ENCODE measurements at regions of chr12 and their contacts with region 1.

Region 1: GRCh38 chr12:53727310-53728041 is at the start of gene CALCOCO1:
- DNase-seq: peak; percentile 84 to 98 (median 95)
- ATAC-seq: peak; percentile 98
- H3K4me3 ChIP-seq: peak within 1 kb of the TSS; percentile 94
- H3K4me3 Mint-ChIP-seq: peak within 1 kb of the TSS; percentile 91 to 100 (median 94)
- H3K27ac ChIP-seq: peak within 1 kb of the TSS; percentile 73
- H3K27ac Mint-ChIP-seq: peak within 1 kb of the TSS; percentile 69 to 98 (median 91)
- H3K4me1 ChIP-seq: peaks cover 13 to 17% of the 10 kb centered on the region in 2 donors
- H3K4me1 Mint-ChIP-seq: peaks cover 10 to 41% (median 32%) of the 10 kb centered on the region in 7 donors
- H3K27me3 ChIP-seq: no peaks in the 10 kb centered on the region
- H3K27me3 Mint-ChIP-seq: peaks cover 0 to 13% (median 0%) of the 10 kb centered on the region in 5 donors
- total RNA-seq, gene CALCOCO1: 66.1 to 175 (median 137) TPM

Region 2: GRCh38 chr12:53500776-53501614 is 226.5 kb before region 1 on chr12 and contains the start of gene TARBP2:
- CTCF ChIA-PET with region 1: no interaction called
- POLR2A ChIA-PET with region 1: no interaction called
- intact Hi-C with region 1: loop called (anchors 1 to 2 kb)
- DNase-seq: peak; percentile 87 to 99 (median 98)
- ATAC-seq: peak; percentile 87
- H3K4me3 ChIP-seq: peak within 1 kb of the TSS; percentile 84
- H3K4me3 Mint-ChIP-seq: peak within 1 kb of the TSS; percentile 86 to 96 (median 92)
- H3K27ac ChIP-seq: peak within 1 kb of the TSS; percentile 98
- H3K27ac Mint-ChIP-seq: peak within 1 kb of the TSS; percentile 87 to 100 (median 97)
- H3K4me1 ChIP-seq: peaks cover 24 to 27% of the 10 kb centered on the region in 2 donors
- H3K4me1 Mint-ChIP-seq: peaks cover 15 to 56% (median 43%) of the 10 kb centered on the region in 7 donors
- H3K27me3 ChIP-seq: no peaks in the 10 kb centered on the region
- H3K27me3 Mint-ChIP-seq: no peaks in the 10 kb centered on the region
- total RNA-seq, gene TARBP2: 25.1 to 45.2 (median 40.7) TPM

Region 3: GRCh38 chr12:53675651-53676453 is 51.6 kb before region 1 on chr12 and contains the start of gene ATP5MC2:
- CTCF ChIA-PET with region 1: interaction called, 3 read pairs
- POLR2A ChIA-PET with region 1: interaction called, 5 read pairs
- intact Hi-C with region 1: loop called (anchors 1 kb)
- DNase-seq: peak; percentile 92 to 98 (median 97)
- ATAC-seq: peak; percentile 97
- H3K4me3 ChIP-seq: peak within 1 kb of the TSS; percentile 64
- H3K4me3 Mint-ChIP-seq: peak within 1 kb of the TSS; percentile 91 to 99 (median 94)
- H3K27ac ChIP-seq: peak within 1 kb of the TSS; percentile 76
- H3K27ac Mint-ChIP-seq: peak within 1 kb of the TSS; percentile 91 to 98 (median 95)
- H3K4me1 ChIP-seq: peaks cover 7 to 21% of the 10 kb centered on the region in 2 donors
- H3K4me1 Mint-ChIP-seq: peaks cover 21 to 38% (median 32%) of the 10 kb centered on the region in 7 donors
- H3K27me3 ChIP-seq: no peaks in the 10 kb centered on the region
- H3K27me3 Mint-ChIP-seq: peaks cover 16 to 35% (median 21%) of the 10 kb centered on the region in 5 donors
- total RNA-seq, gene ATP5MC2: 237 to 332 (median 275) TPM

Region 4: DNA sequence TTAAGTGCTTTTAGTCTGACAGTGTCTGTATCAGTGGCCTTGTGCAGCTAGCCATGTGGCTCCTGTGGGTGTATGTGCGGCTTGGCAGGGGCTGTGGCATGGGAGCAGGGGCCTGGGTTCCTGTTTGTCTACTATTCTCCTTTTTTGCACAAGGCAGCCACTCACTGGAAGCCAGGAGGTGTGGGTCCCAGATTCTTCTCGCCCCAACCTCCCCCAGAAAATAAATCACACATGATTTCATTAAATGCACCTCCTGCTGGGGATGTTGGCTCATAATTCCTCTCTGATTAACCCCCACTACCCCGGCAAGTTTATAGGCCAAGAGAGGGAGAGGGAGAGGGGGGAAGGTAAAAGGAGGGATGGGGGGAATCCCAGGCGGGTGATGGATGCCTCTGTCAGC is 17.8 kb before region 1 on chr12:
- CTCF ChIA-PET with region 1: no interaction called
- POLR2A ChIA-PET with region 1: interaction called, 4 read pairs
- intact Hi-C with region 1: loop called in 1 of 2 experiments (anchors 2 kb)
- DNase-seq: no peak
- ATAC-seq: no peak
- H3K4me3 ChIP-seq: no peak overlapping the region
- H3K4me3 Mint-ChIP-seq: no peak overlapping the region
- H3K27ac ChIP-seq: no peak overlapping the region
- H3K27ac Mint-ChIP-seq: no peak overlapping the region
- H3K4me1 ChIP-seq: no peaks in the 10 kb centered on the region
- H3K4me1 Mint-ChIP-seq: peaks cover 0 to 2% (median 0%) of the 10 kb centered on the region in 7 donors
- H3K27me3 ChIP-seq: peaks cover 0 to under 1% of the 10 kb centered on the region in 2 donors
- H3K27me3 Mint-ChIP-seq: peaks cover 8 to 36% (median 12%) of the 10 kb centered on the region in 5 donors

Region 5: DNA sequence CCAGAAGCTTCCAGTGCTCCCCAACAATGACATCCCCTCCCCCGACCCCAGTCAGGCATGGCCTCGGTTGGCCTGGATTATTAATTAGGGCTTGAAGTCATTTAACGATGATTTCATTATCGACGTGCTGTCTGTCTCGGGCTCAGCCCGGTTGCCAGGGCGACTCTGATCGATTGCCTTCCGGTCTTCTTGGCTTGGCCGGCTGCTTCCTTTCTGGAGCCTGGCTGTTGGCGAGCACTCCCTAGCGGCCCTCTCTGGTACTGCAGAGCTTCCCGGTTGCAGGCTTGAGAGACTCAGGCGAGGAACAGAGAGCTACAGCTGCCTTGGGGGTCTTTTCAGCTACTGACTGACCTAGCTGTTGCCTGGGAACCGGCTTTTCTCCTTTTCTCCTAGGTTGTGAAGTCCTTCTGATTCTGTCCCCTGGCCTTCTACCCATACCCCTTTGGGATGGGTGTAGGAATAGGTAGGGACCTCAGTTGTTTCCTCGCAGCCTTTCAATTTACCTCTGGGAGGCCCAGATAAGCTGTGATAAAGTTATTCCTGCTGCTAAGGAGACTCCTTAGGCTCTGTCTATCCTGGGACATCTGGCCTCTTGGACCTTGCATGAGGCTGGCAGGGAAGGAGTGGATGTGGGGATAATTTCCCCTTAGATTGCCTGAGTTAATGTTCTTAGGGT is 29.8 kb after region 1 on chr12:
- CTCF ChIA-PET with region 1: no interaction called
- POLR2A ChIA-PET with region 1: no interaction called
- intact Hi-C with region 1: no loop called
- DNase-seq: peak; percentile 49 to 81 (median 69)
- ATAC-seq: peak; percentile 91
- H3K4me3 ChIP-seq: peak overlapping the region; percentile 25
- H3K4me3 Mint-ChIP-seq: peak overlapping the region in 9 of 10 donors; percentile 39 to 64 (median 52)
- H3K27ac ChIP-seq: no peak overlapping the region
- H3K27ac Mint-ChIP-seq: peak overlapping the region in 1 of 9 donors; percentile 74
- H3K4me1 ChIP-seq: peaks cover 0 to 6% of the 10 kb centered on the region in 2 donors
- H3K4me1 Mint-ChIP-seq: peaks cover 0 to 35% (median 5%) of the 10 kb centered on the region in 7 donors
- H3K27me3 ChIP-seq: peaks cover 0 to 10% of the 10 kb centered on the region in 2 donors
- H3K27me3 Mint-ChIP-seq: peaks cover 37 to 51% (median 42%) of the 10 kb centered on the region in 5 donors

Region 6: DNA sequence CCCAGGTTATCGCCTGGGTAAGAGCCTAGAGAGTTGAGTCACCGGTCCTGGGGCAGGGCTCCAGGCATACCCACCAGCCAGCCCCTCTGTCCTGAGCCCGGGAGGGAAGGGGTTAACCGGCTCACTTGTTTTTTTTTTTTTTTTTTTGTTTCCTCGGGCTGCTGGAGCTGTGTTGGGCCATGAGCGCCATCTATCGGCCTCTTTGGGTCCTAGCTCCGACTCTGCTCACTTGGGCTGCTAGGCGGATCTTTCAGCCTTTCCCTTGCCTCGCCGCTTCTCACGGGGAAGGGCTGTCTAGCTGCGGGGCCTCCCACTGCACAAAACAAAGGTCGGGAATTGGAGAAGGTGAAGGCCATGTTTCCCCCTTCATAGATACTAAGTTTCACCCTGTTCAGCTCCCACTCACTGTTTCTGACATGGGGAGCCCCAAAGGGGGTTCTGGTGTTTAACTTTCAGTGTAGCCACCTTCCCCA is 464.1 kb after region 1 on chr12:
- CTCF ChIA-PET with region 1: no interaction called
- POLR2A ChIA-PET with region 1: no interaction called
- intact Hi-C with region 1: loop called (anchors 1 kb)
- DNase-seq: peak; percentile 58 to 85 (median 76)
- ATAC-seq: peak; percentile 82
- H3K4me3 ChIP-seq: no peak overlapping the region
- H3K4me3 Mint-ChIP-seq: peak overlapping the region in 3 of 10 donors; percentile 10 to 44 (median 32)
- H3K27ac ChIP-seq: no peak overlapping the region
- H3K27ac Mint-ChIP-seq: peak overlapping the region in 3 of 9 donors; percentile 3 to 48 (median 17)
- H3K4me1 ChIP-seq: peaks cover 8 to 9% of the 10 kb centered on the region in 2 donors
- H3K4me1 Mint-ChIP-seq: peaks cover 17 to 31% (median 27%) of the 10 kb centered on the region in 7 donors
- H3K27me3 ChIP-seq: peaks cover 0 to 6% of the 10 kb centered on the region in 2 donors
- H3K27me3 Mint-ChIP-seq: peaks cover 39 to 61% (median 46%) of the 10 kb centered on the region in 5 donors

Region 7: GRCh38 chr12:54411391-54412241 is 684.1 kb after region 1 on chr12:
- CTCF ChIA-PET with region 1: no interaction called
- POLR2A ChIA-PET with region 1: no interaction called
- intact Hi-C with region 1: loop called in 1 of 2 experiments (anchors 5 kb)
- DNase-seq: peak; percentile 44 to 66 (median 58)
- ATAC-seq: peak; percentile 72
- H3K4me3 ChIP-seq: peak overlapping the region; percentile 84
- H3K4me3 Mint-ChIP-seq: peak overlapping the region; percentile 80 to 92 (median 87)
- H3K27ac ChIP-seq: peak overlapping the region; percentile 96
- H3K27ac Mint-ChIP-seq: peak overlapping the region; percentile 89 to 100 (median 98)
- H3K4me1 ChIP-seq: peaks cover 58 to 66% of the 10 kb centered on the region in 2 donors
- H3K4me1 Mint-ChIP-seq: peaks cover 46 to 97% (median 72%) of the 10 kb centered on the region in 7 donors
- H3K27me3 ChIP-seq: no peaks in the 10 kb centered on the region
- H3K27me3 Mint-ChIP-seq: no peaks in the 10 kb centered on the region